ENCODE measurements at regions of chr9 and their contacts with region 1.

Region 1: DNA sequence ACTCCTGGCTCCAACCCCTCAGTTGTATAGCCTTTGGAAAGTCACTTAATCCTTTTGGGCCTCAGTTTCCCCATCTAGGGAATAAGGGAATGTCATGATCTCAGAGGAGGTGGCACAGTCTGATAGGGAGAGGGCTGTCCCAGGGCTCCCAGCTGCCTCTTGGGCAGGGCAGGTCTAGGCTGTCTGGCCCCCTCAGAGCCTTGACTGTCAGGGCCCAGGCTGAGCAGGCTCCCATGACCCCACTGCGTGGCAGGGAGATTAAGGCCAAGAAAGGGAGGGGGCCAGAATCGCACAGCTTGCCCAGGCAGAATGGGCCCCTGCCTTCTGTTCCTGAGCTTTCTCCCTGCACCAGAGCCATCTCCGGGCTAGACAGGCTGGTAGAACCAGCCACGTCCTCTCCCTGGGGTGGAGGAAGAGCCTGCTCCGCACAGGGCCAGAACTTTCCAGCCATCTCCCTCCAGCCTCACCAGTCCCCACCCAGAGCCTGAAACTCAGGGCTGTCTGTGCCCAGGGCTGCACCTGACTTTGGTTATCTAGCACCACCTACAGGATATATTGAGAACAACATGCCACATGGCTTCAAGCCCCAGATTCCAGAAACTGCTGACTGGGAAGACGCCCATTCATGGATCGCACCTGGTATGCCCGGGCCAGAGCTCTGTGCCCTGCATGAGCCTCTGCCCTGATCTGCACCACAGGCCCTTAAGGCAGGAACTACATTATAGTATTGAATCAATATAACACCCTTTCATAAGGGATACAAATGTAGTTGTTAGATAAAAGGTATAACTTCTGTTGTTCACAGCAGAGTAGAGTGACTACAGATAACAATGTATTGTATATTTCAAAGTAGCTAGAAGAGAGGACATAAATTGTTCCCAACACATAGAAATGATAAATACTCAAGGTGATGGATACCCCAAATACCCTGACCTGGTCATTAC is 32.0 kb downstream of the NAIF1 start:
- DNase-seq: peak; percentile 76 to 80
- H3K4me3 ChIP-seq: no peak overlapping the region
- H3K4me3 Mint-ChIP-seq: no peak overlapping the region
- H3K27ac Mint-ChIP-seq: no peak overlapping the region
- H3K4me1 ChIP-seq: no peaks in the 10 kb centered on the region
- H3K4me1 Mint-ChIP-seq: no peaks in the 10 kb centered on the region
- H3K27me3 ChIP-seq: no peaks in the 10 kb centered on the region
- H3K27me3 Mint-ChIP-seq: no peaks in the 10 kb centered on the region
- CTCF ChIP-seq: peak; percentile 64 to 85

Region 2: GRCh38 chr9:127955294-127956035 is 79.6 kb before region 1 on chr9:
- CTCF ChIA-PET with region 1: interaction called, 8 read pairs
- POLR2A ChIA-PET with region 1: no interaction called
- intact Hi-C with region 1: loop called (anchors 1 kb)
- DNase-seq: peak; percentile 86 to 90
- H3K4me3 ChIP-seq: no peak overlapping the region
- H3K4me3 Mint-ChIP-seq: peak overlapping the region; percentile 58
- H3K27ac Mint-ChIP-seq: peak overlapping the region; percentile 82
- H3K4me1 ChIP-seq: peaks cover 29% of the 10 kb centered on the region
- H3K4me1 Mint-ChIP-seq: peaks cover 12% of the 10 kb centered on the region
- H3K27me3 ChIP-seq: no peaks in the 10 kb centered on the region
- H3K27me3 Mint-ChIP-seq: no peaks in the 10 kb centered on the region
- CTCF ChIP-seq: peak; percentile 64 to 75

Measured in Caco-2 (cell line).